ENCODE measurements at regions of chr9 and their contacts with region 1.

Region 1: GRCh38 chr9:104927912-104928740 is at the start of gene ABCA1:
- ATAC-seq: peak; percentile 55 to 76 (median 72)
- H3K4me3 ChIP-seq: peak within 1 kb of the TSS; percentile 37 to 86 (median 61)
- H3K27ac ChIP-seq: peak within 1 kb of the TSS; percentile 50 to 71
- H3K4me1 ChIP-seq: peaks cover 5 to 14% of the 10 kb centered on the region in 2 donors
- total RNA-seq, gene ABCA1: 9.1 to 103 (median 15.4) TPM

Region 2: GRCh38 chr9:104836235-104836634 is 91.9 kb before region 1 on chr9:
- in situ Hi-C with region 1: loop called in 1 of 9 experiments (anchors 25 kb)
- ATAC-seq: peak in 2 of 8 experiments; percentile 27 to 60
- H3K4me3 ChIP-seq: no peak overlapping the region
- H3K27ac ChIP-seq: no peak overlapping the region
- H3K4me1 ChIP-seq: no peaks in the 10 kb centered on the region

Region 3: GRCh38 chr9:105046907-105047741 is 119.0 kb after region 1 on chr9:
- in situ Hi-C with region 1: loop called in 1 of 9 experiments (anchors 25 kb)
- ATAC-seq: peak in 6 of 8 experiments; percentile 18 to 76 (median 28)
- H3K4me3 ChIP-seq: no peak overlapping the region
- H3K27ac ChIP-seq: no peak overlapping the region
- H3K4me1 ChIP-seq: peaks cover 3 to 6% of the 10 kb centered on the region in 2 donors

Region 4: DNA sequence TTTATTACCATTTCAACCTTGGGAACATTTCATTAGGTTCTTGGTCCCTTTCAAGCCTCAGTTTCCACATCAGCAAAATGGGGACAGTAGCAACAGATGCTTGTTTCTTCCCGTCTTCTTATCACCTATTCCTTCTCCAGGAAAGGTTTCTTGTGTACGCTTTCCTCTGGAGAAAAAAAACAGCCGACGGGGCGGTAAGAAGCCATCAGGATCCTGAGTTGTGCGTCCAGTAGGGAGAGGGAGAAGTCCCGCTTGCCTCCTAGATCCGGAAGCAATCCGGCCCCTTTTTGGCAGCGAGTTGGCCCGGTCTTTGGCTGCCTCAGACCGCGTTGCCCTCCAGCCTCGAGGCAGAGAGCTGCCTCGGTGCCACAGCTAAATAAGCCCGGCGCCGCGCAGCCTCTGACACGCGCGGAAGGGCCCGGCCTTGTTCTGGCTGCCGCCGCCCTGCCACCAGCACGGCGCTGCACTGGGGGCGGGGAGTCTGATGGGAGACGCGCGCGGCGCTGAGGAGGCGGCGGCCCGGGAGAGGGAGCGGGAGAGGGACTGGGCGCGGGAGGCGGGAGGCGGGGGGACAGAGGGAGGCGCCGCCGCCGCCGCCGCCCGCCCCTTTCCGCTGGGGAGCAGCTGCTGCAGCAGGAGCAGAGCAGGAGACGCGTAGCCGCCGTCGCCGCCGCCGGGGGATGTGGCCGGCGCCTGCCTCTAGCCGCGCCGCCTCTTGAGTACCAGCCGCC is 316.0 kb after region 1 on chr9 and contains the start of gene SLC44A1:
- in situ Hi-C with region 1: loop called in 2 of 9 experiments (anchors 10 to 25 kb)
- ATAC-seq: peak; percentile 90 to 98 (median 97)
- H3K4me3 ChIP-seq: peak within 1 kb of the TSS; percentile 49 to 64 (median 62)
- H3K27ac ChIP-seq: peak within 1 kb of the TSS; percentile 70 to 74
- H3K4me1 ChIP-seq: peaks cover 0 to 18% of the 10 kb centered on the region in 2 donors
- total RNA-seq, gene SLC44A1: 7.3 to 166 (median 24.9) TPM

Region 5: DNA sequence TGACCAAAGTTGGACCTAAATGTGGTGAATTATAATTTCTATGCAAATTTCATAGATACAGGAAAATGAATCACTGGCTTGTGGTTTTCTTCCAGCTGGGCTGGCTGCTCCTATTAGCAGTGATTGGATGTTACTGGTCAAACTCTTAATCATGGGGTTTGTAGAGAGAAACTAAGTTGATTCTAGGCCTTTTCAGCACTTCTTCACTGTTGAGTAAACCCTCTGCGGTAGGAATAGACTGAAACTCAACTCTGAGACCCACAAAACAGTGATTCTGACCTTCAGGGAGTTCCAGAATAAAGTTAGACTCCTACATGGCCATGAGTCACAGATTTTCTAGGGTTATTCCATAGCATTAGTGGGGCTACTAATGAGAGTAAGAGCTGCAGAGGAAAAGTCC is 581.9 kb after region 1 on chr9:
- in situ Hi-C with region 1: no loop called
- ATAC-seq: peak in 2 of 8 experiments; percentile 91 to 96
- H3K4me3 ChIP-seq: no peak overlapping the region
- H3K27ac ChIP-seq: no peak overlapping the region
- H3K4me1 ChIP-seq: no peaks in the 10 kb centered on the region

Measured in motor neuron (in vitro differentiated cells).